ENCODE measurements at regions of chr11 and their contacts with region 1.

Region 1: GRCh38 chr11:111230122-111230465 is 15.4 kb upstream of the POU2AF2 start:
- DNase-seq: no peak
- H3K4me3 ChIP-seq: peak overlapping the region in 4 of 8 donors; percentile 26 to 63 (median 29)
- H3K27ac ChIP-seq: peak overlapping the region in 2 of 8 donors; percentile 56 to 72
- H3K4me1 ChIP-seq: peaks cover 3 to 23% (median 15%) of the 10 kb centered on the region in 6 donors
- H3K27me3 ChIP-seq: no peaks in the 10 kb centered on the region
- CTCF ChIP-seq: no peak
- POLR2A ChIP-seq: no peak

Region 2: GRCh38 chr11:110463153-110463552 is 766.9 kb before region 1 on chr11:
- intact Hi-C with region 1: loop called (anchors 10 kb)
- DNase-seq: peak; percentile 83
- H3K4me3 ChIP-seq: no peak overlapping the region
- H3K27ac ChIP-seq: no peak overlapping the region
- H3K4me1 ChIP-seq: no peaks in the 10 kb centered on the region
- H3K27me3 ChIP-seq: no peaks in the 10 kb centered on the region
- CTCF ChIP-seq: peak in 7 of 11 experiments; percentile 35 to 56 (median 36)
- POLR2A ChIP-seq: no peak

Region 3: GRCh38 chr11:110711776-110712658 is 518.1 kb before region 1 on chr11 and contains the start of gene ARHGAP20:
- intact Hi-C with region 1: loop called (anchors 10 kb)
- DNase-seq: peak; percentile 92
- H3K4me3 ChIP-seq: peak within 1 kb of the TSS; percentile 47 to 84 (median 60)
- H3K27ac ChIP-seq: peak within 1 kb of the TSS; percentile 27 to 82 (median 58)
- H3K4me1 ChIP-seq: peaks cover 5 to 35% (median 24%) of the 10 kb centered on the region in 6 donors
- H3K27me3 ChIP-seq: peaks cover 0 to 64% (median 12%) of the 10 kb centered on the region in 7 donors
- CTCF ChIP-seq: peak in 1 of 11 experiments; percentile 12
- POLR2A ChIP-seq: no peak
- total RNA-seq, gene ARHGAP20: 1.2 to 11.0 (median 2.0) TPM

Region 4: GRCh38 chr11:111272420-111272819 is 42.3 kb after region 1 on chr11:
- intact Hi-C with region 1: no loop called
- DNase-seq: no peak
- H3K4me3 ChIP-seq: no peak overlapping the region
- H3K27ac ChIP-seq: no peak overlapping the region
- H3K4me1 ChIP-seq: no peaks in the 10 kb centered on the region
- H3K27me3 ChIP-seq: peaks cover 0 to 9% (median 0%) of the 10 kb centered on the region in 7 donors
- CTCF ChIP-seq: no peak
- POLR2A ChIP-seq: no peak

Region 5: GRCh38 chr11:111479666-111480065 is 249.6 kb after region 1 on chr11:
- intact Hi-C with region 1: no loop called
- DNase-seq: no peak
- H3K4me3 ChIP-seq: no peak overlapping the region
- H3K27ac ChIP-seq: no peak overlapping the region
- H3K4me1 ChIP-seq: no peaks in the 10 kb centered on the region
- H3K27me3 ChIP-seq: peaks cover 0 to 8% (median 0%) of the 10 kb centered on the region in 7 donors
- CTCF ChIP-seq: no peak
- POLR2A ChIP-seq: no peak

Measured in spleen (tissue), 13 donors.